ENCODE measurements at regions of chr3 and their contacts with region 1.

Region 1: GRCh38 chr3:143972505-143973255 is 1.1 kb downstream of the DIPK2A start:
- DNase-seq: peak; percentile 66
- H3K4me3 Mint-ChIP-seq: peak overlapping the region; percentile 88
- H3K27ac Mint-ChIP-seq: peak overlapping the region; percentile 89
- H3K4me1 Mint-ChIP-seq: peaks cover 33% of the 10 kb centered on the region
- H3K27me3 Mint-ChIP-seq: peaks cover 20% of the 10 kb centered on the region

Region 2: GRCh38 chr3:142723968-142724681 is 1248.6 kb before region 1 on chr3 and contains the start of gene TRPC1:
- intact Hi-C with region 1: loop called (anchors 2 kb)
- DNase-seq: peak; percentile 73
- H3K4me3 Mint-ChIP-seq: peak within 1 kb of the TSS; percentile 86
- H3K27ac Mint-ChIP-seq: peak within 1 kb of the TSS; percentile 83
- H3K4me1 Mint-ChIP-seq: peaks cover 4% of the 10 kb centered on the region
- H3K27me3 Mint-ChIP-seq: peaks cover 50% of the 10 kb centered on the region
- total RNA-seq, gene TRPC1: 0.66 and 1.1 TPM in 2 replicates

Region 3: DNA sequence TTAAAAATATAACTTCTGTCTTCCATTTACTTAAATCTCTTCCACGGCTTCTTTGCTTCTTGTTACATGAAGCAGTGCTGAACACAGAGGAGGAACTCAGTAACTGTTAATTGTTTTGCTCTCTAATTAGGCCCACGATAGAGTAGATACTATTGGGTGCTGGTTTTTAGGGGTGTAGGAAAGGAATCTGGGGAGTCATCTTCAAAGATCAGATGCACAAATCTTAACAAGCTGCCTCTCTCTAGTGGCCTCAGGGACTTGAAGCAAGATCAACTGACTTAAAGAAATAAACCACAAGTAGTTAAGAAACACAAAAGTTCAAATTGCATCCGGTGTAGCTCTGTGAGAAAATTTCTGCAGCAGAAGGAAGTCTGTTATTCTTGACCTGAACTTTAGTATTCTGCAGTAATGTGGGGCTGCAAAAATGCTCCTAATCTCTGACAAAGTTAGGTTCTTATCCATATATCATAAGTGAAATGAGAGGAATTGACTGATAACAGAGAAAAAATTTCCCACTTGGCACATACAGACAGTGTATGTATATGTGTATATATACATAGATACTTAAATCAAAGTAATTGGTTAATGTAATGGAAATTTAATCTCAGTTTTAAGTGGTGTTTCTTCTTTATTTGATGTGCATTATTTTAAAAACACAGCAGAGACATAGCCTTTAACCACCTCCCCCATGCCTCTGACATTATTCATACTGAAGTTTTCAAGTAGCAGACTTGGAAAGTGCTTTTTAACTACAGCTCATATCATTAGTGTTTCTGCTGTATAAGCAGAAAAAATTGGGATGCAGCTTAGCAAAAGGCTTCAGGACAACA is 801.3 kb before region 1 on chr3:
- intact Hi-C with region 1: loop called (anchors 5 kb)
- DNase-seq: peak; percentile 11
- H3K4me3 Mint-ChIP-seq: peak overlapping the region; percentile 70
- H3K27ac Mint-ChIP-seq: peak overlapping the region; percentile 92
- H3K4me1 Mint-ChIP-seq: peaks cover 68% of the 10 kb centered on the region
- H3K27me3 Mint-ChIP-seq: no peaks in the 10 kb centered on the region

Region 4: GRCh38 chr3:143847787-143848631 is 124.7 kb before region 1 on chr3 and contains the start of gene SLC9A9:
- intact Hi-C with region 1: loop called (anchors 1 kb)
- DNase-seq: peak; percentile 11
- H3K4me3 Mint-ChIP-seq: peak within 1 kb of the TSS; percentile 94
- H3K27ac Mint-ChIP-seq: peak within 1 kb of the TSS; percentile 86
- H3K4me1 Mint-ChIP-seq: peaks cover 47% of the 10 kb centered on the region
- H3K27me3 Mint-ChIP-seq: peaks cover 5% of the 10 kb centered on the region
- total RNA-seq, gene SLC9A9: 0.64 and 0.88 TPM in 2 replicates

Region 5: DNA sequence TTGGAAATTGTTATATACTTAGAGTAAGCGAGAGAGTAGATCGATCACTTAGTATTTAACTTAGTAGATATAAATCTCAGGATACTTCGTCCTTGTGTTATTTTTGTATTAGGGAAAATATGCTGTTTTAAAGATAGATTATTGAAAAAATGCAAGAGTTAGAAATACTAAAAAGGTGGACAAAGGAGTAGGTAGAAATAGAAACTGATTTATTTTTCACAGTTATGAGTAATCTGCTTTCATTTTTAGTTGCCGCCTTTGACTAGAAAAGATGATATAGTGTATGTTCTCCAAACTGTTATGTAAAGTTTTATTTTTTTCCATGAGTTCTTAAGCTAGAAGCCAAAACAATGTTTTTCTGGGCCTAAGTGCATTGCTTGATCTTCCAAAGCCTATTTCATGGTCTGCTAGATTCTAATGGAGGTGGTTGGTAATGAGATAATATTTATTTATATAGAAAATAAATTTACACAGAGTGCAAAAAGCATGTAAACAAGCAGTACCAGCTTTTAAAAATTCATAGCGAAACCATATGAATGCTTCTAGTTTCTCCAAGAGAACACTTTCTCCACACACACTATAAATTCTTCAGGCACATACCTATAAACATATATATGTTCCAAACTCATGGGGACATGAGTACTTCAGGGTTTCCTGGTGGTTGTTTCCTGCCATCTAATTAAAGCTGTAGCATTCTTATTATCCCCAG is 60.0 kb after region 1 on chr3:
- intact Hi-C with region 1: loop called (anchors 2 kb)
- DNase-seq: no peak
- H3K4me3 Mint-ChIP-seq: no peak overlapping the region
- H3K27ac Mint-ChIP-seq: no peak overlapping the region
- H3K4me1 Mint-ChIP-seq: peaks cover 12% of the 10 kb centered on the region
- H3K27me3 Mint-ChIP-seq: peaks cover 6% of the 10 kb centered on the region

Measured in activated T-helper 1 cell treated with anti-CD3 and anti-CD28 coated beads, Interleukin-12 subunit alpha, Interleukin-12 subunit beta, Interleukin-2, Interleukin-4 antibody, amounts not matched to agents 30 ng/mL and 10 ng/mL and 1 ng/mL, durations not matched to agents 14 hours and 24 hours and 36 hours (primary cell).